IMR-90 (cell line): ENCODE measurements at regions of chr10 and their contacts with region 1.

Region 1: GRCh38 chr10:76558586-76558985 is 1079.0 kb downstream of the KCNMA1 start:
- DNase-seq: peak; percentile 80
- ATAC-seq: peak; percentile 63
- H3K4me3 ChIP-seq: no peak overlapping the region
- H3K27ac ChIP-seq: peak overlapping the region; percentile 48; the same call in 1 of the 2 replicates
- H3K4me1 ChIP-seq: peaks cover 19% of the 10 kb centered on the region
- H3K27me3 ChIP-seq: peaks cover 15% of the 10 kb centered on the region
- CTCF ChIP-seq: no peak
- POLR2A ChIP-seq: no peak
- RAD21 ChIP-seq: no peak

Region 2: DNA sequence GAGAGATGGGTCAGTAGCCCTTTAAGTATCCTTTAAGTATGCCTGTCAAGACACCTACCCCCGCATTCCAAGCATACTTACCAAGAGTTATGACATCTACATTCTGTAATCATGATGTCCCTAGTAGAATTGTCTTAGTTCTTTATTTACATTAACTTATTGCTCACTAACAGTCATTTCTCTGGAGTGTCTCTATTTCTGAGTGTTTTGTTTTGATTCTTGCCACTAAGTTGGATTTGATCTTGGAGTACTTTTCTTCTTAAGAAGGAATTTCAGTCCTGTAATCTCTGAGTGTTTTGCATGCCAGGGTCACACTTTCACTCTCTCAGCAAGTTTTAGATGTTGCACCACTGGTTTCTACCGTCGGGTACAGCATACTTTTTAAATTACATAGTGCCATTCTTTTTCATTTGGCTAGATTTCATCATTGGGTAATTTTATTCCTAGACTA is 25.1 kb after region 1 on chr10:
- CTCF ChIA-PET with region 1: no interaction called
- POLR2A ChIA-PET with region 1: no interaction called
- dilution Hi-C with region 1: no loop called
- in situ Hi-C with region 1: no loop called
- intact Hi-C with region 1: loop called (anchors 2 kb)
- DNase-seq: peak; percentile 90
- ATAC-seq: peak; percentile 80
- H3K4me3 ChIP-seq: no peak overlapping the region
- H3K27ac ChIP-seq: no peak overlapping the region
- H3K4me1 ChIP-seq: peaks cover 16% of the 10 kb centered on the region
- H3K27me3 ChIP-seq: no peaks in the 10 kb centered on the region
- CTCF ChIP-seq: no peak
- POLR2A ChIP-seq: no peak
- RAD21 ChIP-seq: no peak

Region 3: DNA sequence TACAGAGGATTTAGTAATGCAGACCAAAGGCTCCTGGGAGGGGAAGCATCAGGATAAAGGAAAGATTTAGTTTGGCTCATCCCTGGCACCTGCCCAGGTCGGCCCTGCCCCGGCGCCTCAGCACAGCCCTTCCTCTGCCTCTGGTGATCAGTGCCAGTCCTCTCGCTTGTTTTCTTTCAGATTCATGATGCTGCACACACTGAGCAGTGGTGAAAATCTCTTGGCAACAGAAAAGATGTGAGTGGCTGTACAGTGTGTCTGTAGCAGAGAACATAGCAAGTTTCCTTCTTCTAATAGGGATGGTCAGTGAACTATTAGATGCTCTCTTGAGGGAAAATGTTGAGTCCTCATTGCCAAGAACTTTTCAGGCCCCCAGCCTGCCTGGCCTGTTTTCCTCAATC is 84.9 kb after region 1 on chr10:
- CTCF ChIA-PET with region 1: no interaction called
- POLR2A ChIA-PET with region 1: no interaction called
- dilution Hi-C with region 1: no loop called
- in situ Hi-C with region 1: no loop called
- intact Hi-C with region 1: loop called (anchors 2 kb)
- DNase-seq: no peak
- ATAC-seq: no peak
- H3K4me3 ChIP-seq: no peak overlapping the region
- H3K27ac ChIP-seq: no peak overlapping the region
- H3K4me1 ChIP-seq: peaks cover 19% of the 10 kb centered on the region
- H3K27me3 ChIP-seq: no peaks in the 10 kb centered on the region
- CTCF ChIP-seq: no peak
- POLR2A ChIP-seq: no peak
- RAD21 ChIP-seq: no peak

Region 4: DNA sequence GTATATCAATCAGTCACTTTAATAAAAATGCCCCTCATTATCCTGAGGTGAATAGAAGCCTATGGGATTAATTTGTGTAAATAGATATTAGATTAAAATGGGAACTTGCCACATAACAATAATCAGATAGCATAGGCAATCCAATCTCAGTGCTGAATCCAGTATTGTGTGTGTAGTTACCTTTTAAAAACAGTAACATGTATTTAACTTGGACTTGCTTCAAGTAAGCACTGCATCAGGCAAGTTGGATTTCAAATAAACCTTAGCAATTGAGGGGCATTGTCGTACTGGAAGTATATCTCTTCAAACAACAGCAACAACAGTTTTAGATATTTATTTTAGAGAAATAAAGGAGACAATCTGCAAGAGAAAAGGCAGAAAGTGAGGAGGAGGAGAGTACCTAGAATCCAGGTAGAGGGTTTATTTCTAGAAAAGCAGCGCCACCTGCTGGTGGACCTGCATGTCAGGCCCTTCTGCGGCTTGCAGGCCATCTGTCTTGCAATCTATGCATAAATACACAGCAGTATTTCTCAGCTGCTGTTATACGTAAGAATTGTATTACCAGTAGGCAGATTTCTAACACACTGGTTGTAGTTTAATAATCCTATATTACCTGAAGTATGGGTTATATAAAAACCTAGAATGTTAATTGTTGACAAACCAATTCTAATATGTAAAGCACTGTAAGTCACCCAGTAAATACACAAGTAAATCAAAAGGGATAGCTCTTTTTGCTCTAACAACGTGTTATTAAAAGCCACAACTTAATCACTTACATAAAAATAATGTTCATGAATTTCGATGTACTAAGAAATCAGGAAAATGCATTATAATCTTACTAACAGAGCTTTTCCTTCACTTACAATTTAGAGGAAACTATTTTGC is 426.2 kb after region 1 on chr10:
- CTCF ChIA-PET with region 1: interaction called, 6 read pairs
- POLR2A ChIA-PET with region 1: no interaction called
- dilution Hi-C with region 1: no loop called
- in situ Hi-C with region 1: loop called (anchors 25 kb)
- intact Hi-C with region 1: no loop called
- DNase-seq: peak; percentile 79
- ATAC-seq: peak; percentile 85
- H3K4me3 ChIP-seq: no peak overlapping the region
- H3K27ac ChIP-seq: no peak overlapping the region
- H3K4me1 ChIP-seq: no peaks in the 10 kb centered on the region; the same call in 1 of the 2 replicates
- H3K27me3 ChIP-seq: peaks cover 3% of the 10 kb centered on the region; the same call in 1 of the 2 replicates
- CTCF ChIP-seq: peak; percentile 81
- POLR2A ChIP-seq: no peak
- RAD21 ChIP-seq: peak; percentile 72

Region 5: GRCh38 chr10:77111611-77112550 is 553.3 kb after region 1 on chr10:
- CTCF ChIA-PET with region 1: no interaction called
- POLR2A ChIA-PET with region 1: no interaction called
- dilution Hi-C with region 1: no loop called
- in situ Hi-C with region 1: loop called (anchors 10 kb)
- intact Hi-C with region 1: no loop called
- DNase-seq: peak; percentile 87
- ATAC-seq: peak; percentile 90
- H3K4me3 ChIP-seq: no peak overlapping the region
- H3K27ac ChIP-seq: no peak overlapping the region
- H3K4me1 ChIP-seq: peaks cover 3% of the 10 kb centered on the region
- H3K27me3 ChIP-seq: no peaks in the 10 kb centered on the region
- CTCF ChIP-seq: peak; percentile 88
- POLR2A ChIP-seq: peak; percentile 38; the same call in 1 of the 2 replicates
- RAD21 ChIP-seq: peak; percentile 93